ENCODE measurements at regions of chr2 and their contacts with region 1.

Region 1: GRCh38 chr2:236642584-236643291 is 73.1 kb downstream of the ACKR3 start:
- DNase-seq: peak; percentile 93 to 99
- H3K4me3 ChIP-seq: peak overlapping the region in 1 of 2 donors; percentile 28
- H3K27ac ChIP-seq: peak overlapping the region; percentile 79 to 85
- H3K4me1 ChIP-seq: peaks cover 10 to 32% of the 10 kb centered on the region in 2 donors
- H3K27me3 ChIP-seq: no peaks in the 10 kb centered on the region
- CTCF ChIP-seq: no peak

Region 2: DNA sequence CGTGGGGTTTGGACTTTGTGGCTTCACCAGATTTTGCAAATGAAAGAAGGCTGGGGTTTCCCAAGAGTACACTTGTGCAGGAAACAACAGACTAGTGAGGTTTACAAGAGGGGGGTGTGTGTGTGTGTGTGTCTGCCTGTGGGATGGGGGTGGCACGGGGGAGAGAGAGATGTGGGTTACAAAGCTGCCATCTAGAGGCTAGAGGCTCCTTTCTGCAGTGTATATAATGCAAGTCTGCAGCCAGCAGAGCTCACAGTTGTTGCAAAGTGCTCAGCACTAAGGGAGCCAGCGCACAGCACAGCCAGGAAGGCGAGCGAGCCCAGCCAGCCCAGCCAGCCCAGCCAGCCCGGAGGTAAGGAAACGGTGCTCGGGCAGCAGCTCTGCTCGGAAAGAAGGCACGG is 73.2 kb before region 1 on chr2 and contains the start of gene ACKR3:
- intact Hi-C with region 1: loop called (anchors 2 kb)
- DNase-seq: peak; percentile 50 to 93
- H3K4me3 ChIP-seq: peak within 1 kb of the TSS; percentile 72 to 74
- H3K27ac ChIP-seq: peak within 1 kb of the TSS; percentile 94 to 97
- H3K4me1 ChIP-seq: peaks cover 4 to 37% of the 10 kb centered on the region in 2 donors
- H3K27me3 ChIP-seq: no peaks in the 10 kb centered on the region
- CTCF ChIP-seq: peak; percentile 22 to 55 (median 44)
- total RNA-seq, gene ACKR3: 75.6 TPM

Region 3: GRCh38 chr2:236659758-236660150 is 17.0 kb after region 1 on chr2:
- intact Hi-C with region 1: loop called (anchors 1 kb)
- DNase-seq: peak in 1 of 2 donors; percentile 85
- H3K4me3 ChIP-seq: no peak overlapping the region
- H3K27ac ChIP-seq: peak overlapping the region in 1 of 2 donors; percentile 36
- H3K4me1 ChIP-seq: peaks cover 8 to 35% of the 10 kb centered on the region in 2 donors
- H3K27me3 ChIP-seq: no peaks in the 10 kb centered on the region
- CTCF ChIP-seq: no peak

Region 4: DNA sequence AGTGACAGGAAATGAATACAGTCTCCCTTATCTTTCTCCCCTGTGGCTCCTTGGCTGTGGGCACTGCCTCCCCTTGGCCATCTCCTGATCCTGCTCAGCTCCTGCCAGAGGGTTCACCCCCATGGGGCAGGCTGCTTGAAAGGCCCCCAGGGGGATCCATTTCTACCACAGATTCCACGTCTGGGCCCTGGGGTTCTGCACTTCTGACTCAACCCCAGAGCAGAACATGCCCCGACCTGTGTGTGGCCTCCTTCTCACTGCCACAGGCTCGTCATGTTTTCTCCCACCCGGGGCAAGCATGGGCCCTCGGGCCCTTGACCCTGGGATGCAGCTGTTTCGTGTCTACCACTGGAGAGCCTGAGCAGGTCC is 49.0 kb after region 1 on chr2:
- intact Hi-C with region 1: no loop called
- DNase-seq: no peak
- H3K4me3 ChIP-seq: no peak overlapping the region
- H3K27ac ChIP-seq: no peak overlapping the region
- H3K4me1 ChIP-seq: peaks cover 18 to 31% of the 10 kb centered on the region in 2 donors
- H3K27me3 ChIP-seq: no peaks in the 10 kb centered on the region
- CTCF ChIP-seq: no peak

Region 5: GRCh38 chr2:236731878-236732580 is 89.3 kb after region 1 on chr2:
- intact Hi-C with region 1: loop called (anchors 5 kb)
- DNase-seq: peak; percentile 46 to 88
- H3K4me3 ChIP-seq: no peak overlapping the region
- H3K27ac ChIP-seq: peak overlapping the region; percentile 42 to 61
- H3K4me1 ChIP-seq: peaks cover 0 to 10% of the 10 kb centered on the region in 2 donors
- H3K27me3 ChIP-seq: no peaks in the 10 kb centered on the region
- CTCF ChIP-seq: no peak

Region 6: GRCh38 chr2:236782938-236783337 is 140.2 kb after region 1 on chr2:
- intact Hi-C with region 1: loop called (anchors 2 kb)
- DNase-seq: no peak
- H3K4me3 ChIP-seq: no peak overlapping the region
- H3K27ac ChIP-seq: no peak overlapping the region
- H3K4me1 ChIP-seq: peaks cover 0 to 15% of the 10 kb centered on the region in 2 donors
- H3K27me3 ChIP-seq: no peaks in the 10 kb centered on the region
- CTCF ChIP-seq: no peak

Region 7: GRCh38 chr2:236887531-236887930 is 244.8 kb after region 1 on chr2:
- intact Hi-C with region 1: loop called (anchors 1 kb)
- DNase-seq: peak in 1 of 2 donors; percentile 91
- H3K4me3 ChIP-seq: peak overlapping the region in 1 of 2 donors; percentile 7
- H3K27ac ChIP-seq: peak overlapping the region; percentile 89 to 93
- H3K4me1 ChIP-seq: peaks cover 9 to 18% of the 10 kb centered on the region in 2 donors
- H3K27me3 ChIP-seq: no peaks in the 10 kb centered on the region
- CTCF ChIP-seq: peak in 1 of 3 experiments; percentile 7

Measured in ascending aorta (tissue), 2 donors.